Upper lobe of right lung (tissue), 1 donor: ENCODE measurements at regions of chr17 and their contacts with region 1.

Region 1: DNA sequence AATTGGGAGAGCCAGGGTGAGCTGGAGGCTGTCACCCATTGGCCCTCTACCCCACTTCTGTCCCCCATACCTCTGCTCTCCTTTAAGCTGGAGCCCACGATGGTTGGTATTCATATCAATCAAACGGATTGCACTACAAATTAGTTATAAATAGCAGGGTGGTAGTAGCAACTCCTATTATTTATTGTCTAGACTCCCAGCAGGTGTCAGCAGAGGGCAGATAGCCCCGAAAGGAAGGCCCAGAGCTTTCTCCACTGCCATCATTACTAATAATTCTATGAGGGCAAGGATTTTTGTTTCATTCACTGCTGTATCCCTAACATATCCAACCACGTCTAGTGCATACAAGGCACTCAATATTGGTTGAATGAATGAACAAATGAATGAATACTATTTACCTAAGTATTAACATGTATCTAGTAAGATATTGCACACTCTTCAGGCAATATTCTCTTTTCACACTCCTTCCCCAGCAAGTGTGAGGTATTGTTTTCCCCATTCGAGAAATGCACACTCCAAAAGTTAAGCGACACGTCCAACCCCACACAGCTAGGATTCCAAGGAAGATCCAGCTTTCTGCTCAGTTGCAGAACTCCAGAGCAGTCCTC is 6.3 kb downstream of the C17orf50 start:
- DNase-seq: no peak
- ATAC-seq: peak; percentile 9
- H3K4me3 ChIP-seq: no peak overlapping the region
- H3K27ac ChIP-seq: no peak overlapping the region
- H3K4me1 ChIP-seq: peaks cover 5% of the 10 kb centered on the region
- H3K27me3 ChIP-seq: no peaks in the 10 kb centered on the region
- CTCF ChIP-seq: peak; percentile 62

Region 2: DNA sequence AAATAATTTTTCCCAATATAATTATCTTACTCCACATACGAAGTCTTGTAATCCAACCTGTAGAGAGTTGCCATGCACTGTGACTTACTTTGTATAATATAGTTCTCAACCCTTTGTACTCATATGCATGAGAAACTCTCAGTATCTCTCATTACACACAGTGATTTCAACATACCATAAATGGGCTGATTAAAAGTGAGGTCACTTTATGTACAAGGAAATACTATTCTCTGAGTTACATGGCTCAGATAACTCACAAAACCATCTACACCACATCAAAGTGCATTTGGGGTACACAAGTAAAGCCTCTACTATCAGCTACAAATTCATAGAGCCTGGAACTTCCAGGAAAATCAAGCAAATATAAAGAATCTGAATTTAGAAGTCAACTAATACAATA is 362.6 kb before region 1 on chr17:
- intact Hi-C with region 1: no loop called
- DNase-seq: no peak
- ATAC-seq: no peak
- H3K4me3 ChIP-seq: no peak overlapping the region
- H3K27ac ChIP-seq: no peak overlapping the region
- H3K4me1 ChIP-seq: no peaks in the 10 kb centered on the region
- H3K27me3 ChIP-seq: no peaks in the 10 kb centered on the region
- CTCF ChIP-seq: no peak

Region 3: DNA sequence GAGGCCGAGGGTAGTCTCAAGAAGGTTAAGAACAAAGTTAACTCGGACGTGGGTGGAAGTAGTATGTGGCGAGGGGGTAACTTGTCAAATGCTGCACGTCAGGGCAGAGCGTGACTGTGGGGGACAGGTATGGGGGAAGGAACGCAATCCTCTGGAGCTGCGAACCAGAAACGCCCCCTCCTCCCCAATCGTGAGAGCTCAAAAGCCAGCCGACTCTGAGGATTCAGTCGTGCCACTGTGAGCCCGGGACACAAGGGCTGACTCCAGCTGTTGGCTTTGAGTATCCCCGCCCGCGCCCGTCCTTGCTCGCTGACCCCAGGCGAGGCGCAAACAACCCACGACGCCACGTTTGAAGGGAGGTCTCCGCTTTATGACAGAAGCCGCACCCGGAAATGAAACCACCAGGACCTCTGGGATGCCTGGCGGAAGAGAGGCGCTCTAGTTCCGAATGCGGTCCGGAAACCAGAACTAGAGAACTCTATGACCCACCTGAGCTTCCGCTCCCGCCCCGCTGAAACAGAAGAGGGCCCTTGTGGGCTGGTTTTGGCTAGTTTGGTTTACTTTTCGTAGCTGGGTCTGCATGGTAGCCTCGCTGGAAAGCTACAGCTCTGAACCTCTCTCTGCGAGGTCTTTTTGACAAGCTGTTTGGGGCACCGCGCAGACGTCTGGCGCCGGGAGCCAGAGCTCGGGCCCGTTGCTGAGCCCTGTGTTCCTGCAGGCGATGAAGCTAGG is 188.6 kb before region 1 on chr17 and contains the start of gene PEX12:
- intact Hi-C with region 1: no loop called
- DNase-seq: peak; percentile 92
- ATAC-seq: peak; percentile 99
- H3K4me3 ChIP-seq: peak within 1 kb of the TSS; percentile 69
- H3K27ac ChIP-seq: peak within 1 kb of the TSS; percentile 92
- H3K4me1 ChIP-seq: peaks cover 15% of the 10 kb centered on the region
- H3K27me3 ChIP-seq: no peaks in the 10 kb centered on the region
- CTCF ChIP-seq: no peak
- total RNA-seq, gene PEX12: 4.7 TPM

Region 4: DNA sequence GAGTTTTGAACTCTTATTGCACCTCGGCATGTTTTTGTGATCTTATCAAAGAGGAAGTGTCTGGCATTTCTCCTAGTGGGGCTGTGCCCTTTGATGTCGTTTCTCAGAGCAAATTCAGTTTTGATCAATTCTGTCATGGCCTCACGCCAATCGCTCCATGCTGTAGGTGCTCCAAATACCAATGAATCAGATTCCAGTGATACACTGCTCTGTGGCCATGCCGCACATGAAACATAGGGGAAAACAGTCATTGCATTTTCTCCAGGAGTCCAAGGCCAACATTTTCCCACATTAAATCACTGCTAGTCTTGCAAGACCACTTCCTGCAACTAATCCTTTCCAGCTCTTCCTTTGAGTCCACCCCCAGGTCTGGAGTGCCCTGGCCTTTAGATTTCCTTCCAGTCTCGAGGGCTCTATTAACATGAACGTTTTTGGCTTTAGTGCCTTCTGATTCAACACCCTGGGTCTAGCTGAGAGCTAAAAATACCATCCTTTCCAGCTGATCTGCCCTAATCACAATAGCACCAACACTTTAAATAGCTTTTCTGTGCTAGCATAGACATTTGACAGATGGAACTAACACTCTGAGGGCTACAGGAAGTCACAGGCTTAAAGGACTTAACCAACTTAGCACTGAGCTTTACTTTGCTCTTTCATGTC is 53.8 kb before region 1 on chr17:
- intact Hi-C with region 1: no loop called
- DNase-seq: no peak
- ATAC-seq: peak; percentile 11
- H3K4me3 ChIP-seq: no peak overlapping the region
- H3K27ac ChIP-seq: no peak overlapping the region
- H3K4me1 ChIP-seq: peaks cover 26% of the 10 kb centered on the region
- H3K27me3 ChIP-seq: no peaks in the 10 kb centered on the region
- CTCF ChIP-seq: no peak

Region 5: DNA sequence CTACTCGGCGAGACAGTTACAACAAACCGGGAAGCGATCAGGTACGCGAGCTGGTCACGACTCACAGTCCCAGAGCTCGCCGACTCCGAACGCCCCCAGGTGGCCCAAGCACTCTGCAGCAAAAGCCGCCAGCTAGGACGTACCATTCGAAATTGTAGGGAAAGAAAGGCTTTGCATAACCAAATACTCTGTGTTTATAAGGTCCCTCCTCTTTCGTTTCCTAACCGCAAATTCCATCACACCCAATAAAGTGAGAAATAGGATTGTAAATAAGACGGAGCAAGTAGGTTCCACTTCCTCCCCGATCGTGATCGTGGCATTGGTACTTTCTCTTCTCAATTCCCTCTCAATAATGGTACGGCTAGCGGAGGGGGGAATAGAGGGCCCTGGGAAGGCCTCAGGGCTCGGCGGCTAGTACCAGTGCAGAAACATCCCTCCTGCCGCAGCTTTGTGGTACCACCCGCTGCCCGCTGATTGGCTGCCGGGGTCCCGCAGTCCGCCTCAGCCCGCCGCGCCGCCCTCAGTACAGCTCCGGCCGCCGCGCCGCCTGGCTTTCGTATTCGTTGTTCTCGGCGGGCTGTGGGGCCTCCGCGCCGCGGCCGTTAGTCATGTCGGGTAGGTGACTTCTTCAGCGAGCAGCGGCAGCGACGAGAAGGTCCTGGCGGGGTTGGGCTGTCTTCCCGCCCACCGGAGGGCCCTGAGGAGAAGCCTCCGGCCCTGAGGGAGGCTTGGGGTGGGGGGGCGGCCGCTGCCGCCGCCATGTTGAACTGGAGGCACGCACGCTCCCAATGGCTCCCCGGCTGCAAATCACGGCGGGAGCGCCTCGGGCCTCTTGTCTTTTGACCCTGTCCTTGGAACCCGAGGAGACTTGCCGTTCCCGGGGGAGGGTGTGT is 42.2 kb after region 1 on chr17 and contains the start of gene TAF15:
- intact Hi-C with region 1: loop called (anchors 5 kb)
- DNase-seq: peak; percentile 97
- ATAC-seq: peak; percentile 98
- H3K4me3 ChIP-seq: peak within 1 kb of the TSS; percentile 77
- H3K27ac ChIP-seq: peak within 1 kb of the TSS; percentile 91
- H3K4me1 ChIP-seq: peaks cover 47% of the 10 kb centered on the region
- H3K27me3 ChIP-seq: no peaks in the 10 kb centered on the region
- CTCF ChIP-seq: peak; percentile 65
- total RNA-seq, gene TAF15: 142 TPM